Heart left ventricle (tissue), 16 donors: ENCODE measurements at regions of chr7 and their contacts with region 1.

Region 1: DNA sequence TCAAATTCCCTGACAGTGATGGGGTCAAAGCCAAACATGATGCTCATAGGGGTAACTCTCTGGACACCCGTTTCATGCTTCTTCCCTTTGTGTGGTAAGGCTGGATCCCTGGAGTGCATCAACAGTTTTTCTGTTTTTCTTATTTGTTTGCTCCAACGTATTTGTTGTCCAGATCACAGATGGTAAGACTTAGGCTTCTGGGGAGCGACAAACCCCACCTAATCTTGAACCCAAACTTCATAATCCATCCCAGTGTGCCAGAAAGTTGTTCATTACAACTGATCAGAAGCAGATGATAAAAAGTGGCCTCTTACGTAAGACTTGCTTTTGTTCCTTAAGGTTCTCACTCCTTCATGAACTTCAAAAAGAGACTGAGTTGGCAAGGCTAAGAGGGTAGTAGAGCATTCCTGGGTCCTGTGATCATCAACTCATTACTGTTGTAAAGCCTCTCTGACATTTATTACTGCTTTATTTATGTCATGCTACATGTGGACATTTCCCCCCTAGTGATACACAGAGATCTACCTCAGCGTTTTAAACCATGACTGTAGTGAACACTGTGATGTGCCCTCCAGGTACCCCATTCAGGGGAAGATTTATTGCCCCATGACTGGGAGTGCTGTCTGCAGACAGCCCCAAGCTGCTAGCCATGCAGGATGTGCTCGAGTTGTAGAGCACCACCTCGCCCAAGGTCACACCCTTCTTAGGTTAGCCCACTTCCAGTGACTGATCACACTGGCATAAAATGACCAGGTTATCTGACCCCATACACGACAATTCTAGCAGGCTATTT is 125.5 kb downstream of the CCDC71L start:
- DNase-seq: no peak
- ATAC-seq: no peak
- H3K4me3 ChIP-seq: no peak overlapping the region
- H3K27ac ChIP-seq: no peak overlapping the region
- H3K4me1 ChIP-seq: no peaks in the 10 kb centered on the region
- H3K27me3 ChIP-seq: no peaks in the 10 kb centered on the region
- CTCF ChIP-seq: no peak
- POLR2A ChIP-seq: no peak

Region 2: DNA sequence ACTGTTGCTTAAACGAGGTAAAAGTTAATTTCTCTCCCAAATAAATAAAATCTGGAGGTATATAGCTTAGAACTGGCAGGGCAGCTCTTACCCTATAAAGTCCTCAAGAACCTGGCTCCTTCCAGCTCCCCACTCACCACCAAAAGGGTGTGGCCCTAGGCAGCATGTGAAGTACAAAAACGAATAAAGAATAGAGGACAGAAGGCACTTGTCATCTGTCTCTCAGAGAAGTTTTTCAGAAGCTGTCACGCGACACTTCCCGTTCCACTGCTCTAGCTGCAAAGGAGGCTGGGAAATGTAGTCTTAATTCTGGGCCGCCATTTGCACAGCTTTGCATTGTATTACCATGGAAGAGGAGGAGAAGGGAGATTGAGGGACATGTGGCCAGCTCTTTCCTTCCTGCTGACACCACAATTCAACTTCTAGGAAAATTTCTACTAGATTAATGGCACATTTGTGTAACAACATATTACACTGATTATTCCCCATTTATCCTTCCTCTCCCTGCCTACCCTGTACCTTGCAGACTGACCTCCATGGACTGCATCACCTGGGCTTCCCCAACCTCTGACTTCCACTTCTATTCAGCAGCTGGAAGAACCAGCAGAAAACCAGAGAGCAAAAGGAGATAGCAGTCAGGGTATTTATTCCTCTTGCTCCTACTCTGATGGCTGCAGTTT is 63.4 kb after region 1 on chr7:
- intact Hi-C with region 1: loop called in 1 of 10 experiments (anchors 10 kb)
- DNase-seq: peak; percentile 61 to 75 (median 71)
- ATAC-seq: peak; percentile 93 to 97 (median 96)
- H3K4me3 ChIP-seq: peak overlapping the region in 11 of 12 donors; percentile 17 to 63 (median 47)
- H3K27ac ChIP-seq: peak overlapping the region in 6 of 12 donors; percentile 2 to 50 (median 26)
- H3K4me1 ChIP-seq: peaks cover 0 to 12% (median 0%) of the 10 kb centered on the region in 12 donors
- H3K27me3 ChIP-seq: no peaks in the 10 kb centered on the region
- CTCF ChIP-seq: no peak
- POLR2A ChIP-seq: no peak